Naive thymus-derived CD4-positive, alpha-beta T cell (primary cell): ENCODE measurements at regions of chr3 and their contacts with region 1.

Region 1: GRCh38 chr3:71305231-71306206 is 278.0 kb downstream of the FOXP1 start:
- DNase-seq: peak in 8 of 9 donors; percentile 23 to 46 (median 30)
- ATAC-seq: peak; percentile 51
- H3K4me3 ChIP-seq: peak overlapping the region; percentile 73
- H3K4me3 Mint-ChIP-seq: peak overlapping the region; percentile 84 to 98 (median 95)
- H3K27ac ChIP-seq: peak overlapping the region; percentile 90
- H3K27ac Mint-ChIP-seq: peak overlapping the region in 8 of 9 donors; percentile 68 to 99 (median 98)
- H3K4me1 ChIP-seq: peaks cover 12 to 63% of the 10 kb centered on the region in 2 donors
- H3K4me1 Mint-ChIP-seq: peaks cover 46 to 90% (median 74%) of the 10 kb centered on the region in 7 donors
- H3K27me3 ChIP-seq: no peaks in the 10 kb centered on the region
- H3K27me3 Mint-ChIP-seq: peaks cover 0 to 67% (median 0%) of the 10 kb centered on the region in 5 donors

Region 2: GRCh38 chr3:70531063-70531657 is 774.4 kb before region 1 on chr3:
- CTCF ChIA-PET with region 1: no interaction called
- POLR2A ChIA-PET with region 1: no interaction called
- intact Hi-C with region 1: loop called in 1 of 2 experiments (anchors 2 kb)
- DNase-seq: peak in 4 of 9 donors; percentile 4 to 9 (median 6)
- ATAC-seq: no peak
- H3K4me3 ChIP-seq: no peak overlapping the region
- H3K4me3 Mint-ChIP-seq: no peak overlapping the region
- H3K27ac ChIP-seq: no peak overlapping the region
- H3K27ac Mint-ChIP-seq: no peak overlapping the region
- H3K4me1 ChIP-seq: no peaks in the 10 kb centered on the region
- H3K4me1 Mint-ChIP-seq: no peaks in the 10 kb centered on the region
- H3K27me3 ChIP-seq: no peaks in the 10 kb centered on the region
- H3K27me3 Mint-ChIP-seq: peaks cover 2 to 15% (median 10%) of the 10 kb centered on the region in 5 donors

Region 3: GRCh38 chr3:70990723-70991122 is 314.8 kb before region 1 on chr3:
- CTCF ChIA-PET with region 1: no interaction called
- POLR2A ChIA-PET with region 1: no interaction called
- intact Hi-C with region 1: loop called in 1 of 2 experiments (anchors 5 kb)
- DNase-seq: no peak
- ATAC-seq: no peak
- H3K4me3 ChIP-seq: no peak overlapping the region
- H3K4me3 Mint-ChIP-seq: peak overlapping the region in 8 of 10 donors; percentile 46 to 80 (median 56)
- H3K27ac ChIP-seq: peak overlapping the region; percentile 17
- H3K27ac Mint-ChIP-seq: peak overlapping the region in 7 of 9 donors; percentile 56 to 90 (median 88)
- H3K4me1 ChIP-seq: peaks cover 17 to 35% of the 10 kb centered on the region in 2 donors
- H3K4me1 Mint-ChIP-seq: peaks cover 28 to 95% (median 82%) of the 10 kb centered on the region in 7 donors
- H3K27me3 ChIP-seq: no peaks in the 10 kb centered on the region
- H3K27me3 Mint-ChIP-seq: no peaks in the 10 kb centered on the region

Region 4: GRCh38 chr3:71087143-71088018 is 218.1 kb before region 1 on chr3:
- CTCF ChIA-PET with region 1: no interaction called
- POLR2A ChIA-PET with region 1: interaction called, 3 read pairs
- intact Hi-C with region 1: loop called in 1 of 2 experiments (anchors 5 kb)
- DNase-seq: peak in 8 of 9 donors; percentile 39 to 76 (median 58)
- ATAC-seq: peak; percentile 79
- H3K4me3 ChIP-seq: peak overlapping the region; percentile 7
- H3K4me3 Mint-ChIP-seq: peak overlapping the region; percentile 39 to 78 (median 70)
- H3K27ac ChIP-seq: peak overlapping the region; percentile 42
- H3K27ac Mint-ChIP-seq: peak overlapping the region; percentile 43 to 98 (median 92)
- H3K4me1 ChIP-seq: peaks cover 34 to 69% of the 10 kb centered on the region in 2 donors
- H3K4me1 Mint-ChIP-seq: peaks cover 61 to 94% (median 89%) of the 10 kb centered on the region in 7 donors
- H3K27me3 ChIP-seq: no peaks in the 10 kb centered on the region
- H3K27me3 Mint-ChIP-seq: no peaks in the 10 kb centered on the region

Region 5: GRCh38 chr3:71288269-71288930 is 17.1 kb before region 1 on chr3:
- CTCF ChIA-PET with region 1: no interaction called
- POLR2A ChIA-PET with region 1: interaction called, 4 read pairs
- intact Hi-C with region 1: loop called in 1 of 2 experiments (anchors 1 kb)
- DNase-seq: no peak
- ATAC-seq: no peak
- H3K4me3 ChIP-seq: no peak overlapping the region
- H3K4me3 Mint-ChIP-seq: peak overlapping the region in 5 of 10 donors; percentile 6 to 55 (median 10)
- H3K27ac ChIP-seq: no peak overlapping the region
- H3K27ac Mint-ChIP-seq: peak overlapping the region in 7 of 9 donors; percentile 10 to 78 (median 51)
- H3K4me1 ChIP-seq: peaks cover 0 to 14% of the 10 kb centered on the region in 2 donors
- H3K4me1 Mint-ChIP-seq: peaks cover 5 to 85% (median 76%) of the 10 kb centered on the region in 7 donors
- H3K27me3 ChIP-seq: no peaks in the 10 kb centered on the region
- H3K27me3 Mint-ChIP-seq: peaks cover 0 to 2% (median 0%) of the 10 kb centered on the region in 5 donors

Region 6: DNA sequence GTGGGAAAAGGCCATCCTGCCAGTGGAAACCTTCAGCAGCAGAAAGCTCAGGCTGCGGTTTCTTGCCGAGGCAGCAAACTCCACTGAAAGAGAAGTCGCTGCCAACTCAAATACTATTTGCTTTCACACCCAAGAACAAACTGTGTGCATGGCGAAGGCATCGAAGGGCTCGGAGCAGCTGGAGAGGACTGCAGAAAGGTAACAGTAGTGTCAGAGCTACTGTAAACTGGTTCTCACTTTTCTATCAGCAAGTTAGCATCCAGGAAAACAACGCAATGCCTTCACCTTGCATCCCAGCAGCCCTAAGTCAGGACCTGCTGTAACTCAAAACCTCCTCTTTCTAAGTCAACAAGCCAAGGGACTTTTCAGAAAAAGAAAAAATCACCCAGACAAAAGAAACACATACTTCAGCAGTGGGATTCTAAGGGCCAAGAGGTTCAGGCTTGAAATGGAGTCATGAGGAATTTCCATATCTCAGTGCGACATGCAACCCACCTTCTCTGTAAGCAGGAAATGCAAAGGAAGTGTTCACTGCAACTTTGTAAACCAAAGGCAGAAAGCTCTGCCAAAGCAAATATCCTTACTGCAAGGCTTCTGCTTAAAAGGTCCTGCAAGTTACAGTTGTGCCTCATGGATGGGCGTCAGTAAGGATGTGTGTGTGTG is 84.5 kb after region 1 on chr3:
- CTCF ChIA-PET with region 1: interaction called, 3 read pairs
- POLR2A ChIA-PET with region 1: interaction called, 5 read pairs
- intact Hi-C with region 1: loop called (anchors 5 kb)
- DNase-seq: peak in 8 of 9 donors; percentile 25 to 67 (median 49)
- ATAC-seq: peak; percentile 55
- H3K4me3 ChIP-seq: peak overlapping the region; percentile 51
- H3K4me3 Mint-ChIP-seq: peak overlapping the region; percentile 68 to 88 (median 83)
- H3K27ac ChIP-seq: peak overlapping the region; percentile 81
- H3K27ac Mint-ChIP-seq: peak overlapping the region; percentile 75 to 99 (median 90)
- H3K4me1 ChIP-seq: peaks cover 29 to 74% of the 10 kb centered on the region in 2 donors
- H3K4me1 Mint-ChIP-seq: peaks cover 27 to 93% (median 83%) of the 10 kb centered on the region in 7 donors
- H3K27me3 ChIP-seq: no peaks in the 10 kb centered on the region
- H3K27me3 Mint-ChIP-seq: peaks cover 0 to 22% (median 0%) of the 10 kb centered on the region in 5 donors

Region 7: DNA sequence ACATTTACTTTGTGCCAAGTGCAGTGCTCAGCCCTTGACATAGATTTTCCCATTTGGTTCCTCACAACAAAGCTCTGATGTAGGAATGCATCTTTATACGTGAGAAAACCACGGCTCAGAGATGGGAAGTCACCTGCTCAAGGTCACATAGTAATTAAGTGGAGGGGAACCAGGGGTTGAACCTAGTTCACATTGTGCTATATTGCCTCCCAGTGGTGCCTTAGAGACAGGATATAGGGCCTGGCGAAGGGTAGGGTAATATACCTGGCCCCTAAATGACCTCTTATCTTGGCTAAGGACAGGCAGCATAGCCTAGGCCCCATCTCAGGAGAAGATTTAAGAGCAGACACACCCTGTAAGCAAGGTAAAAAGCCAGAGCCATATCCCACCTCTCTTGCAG is 206.5 kb after region 1 on chr3:
- CTCF ChIA-PET with region 1: interaction called, 5 read pairs
- POLR2A ChIA-PET with region 1: interaction called, 3 read pairs
- intact Hi-C with region 1: loop called (anchors 1 to 2 kb)
- DNase-seq: peak in 7 of 9 donors; percentile 60 to 76 (median 66)
- ATAC-seq: peak; percentile 96
- H3K4me3 ChIP-seq: no peak overlapping the region
- H3K4me3 Mint-ChIP-seq: peak overlapping the region in 7 of 10 donors; percentile 6 to 56 (median 44)
- H3K27ac ChIP-seq: peak overlapping the region; percentile 36
- H3K27ac Mint-ChIP-seq: peak overlapping the region in 5 of 9 donors; percentile 69 to 91 (median 83)
- H3K4me1 ChIP-seq: peaks cover 5 to 22% of the 10 kb centered on the region in 2 donors
- H3K4me1 Mint-ChIP-seq: peaks cover 11 to 54% (median 24%) of the 10 kb centered on the region in 7 donors
- H3K27me3 ChIP-seq: no peaks in the 10 kb centered on the region
- H3K27me3 Mint-ChIP-seq: no peaks in the 10 kb centered on the region